ENCODE measurements at regions of chr15 and their contacts with region 1.

Region 1: GRCh38 chr15:94163999-94164807 is 67.2 kb upstream of the MCTP2 start:
- DNase-seq: peak; percentile 60

Region 2: GRCh38 chr15:94182883-94183282 is 18.7 kb after region 1 on chr15:
- CTCF ChIA-PET with region 1: no interaction called
- POLR2A ChIA-PET with region 1: no interaction called
- DNase-seq: no peak

Region 3: DNA sequence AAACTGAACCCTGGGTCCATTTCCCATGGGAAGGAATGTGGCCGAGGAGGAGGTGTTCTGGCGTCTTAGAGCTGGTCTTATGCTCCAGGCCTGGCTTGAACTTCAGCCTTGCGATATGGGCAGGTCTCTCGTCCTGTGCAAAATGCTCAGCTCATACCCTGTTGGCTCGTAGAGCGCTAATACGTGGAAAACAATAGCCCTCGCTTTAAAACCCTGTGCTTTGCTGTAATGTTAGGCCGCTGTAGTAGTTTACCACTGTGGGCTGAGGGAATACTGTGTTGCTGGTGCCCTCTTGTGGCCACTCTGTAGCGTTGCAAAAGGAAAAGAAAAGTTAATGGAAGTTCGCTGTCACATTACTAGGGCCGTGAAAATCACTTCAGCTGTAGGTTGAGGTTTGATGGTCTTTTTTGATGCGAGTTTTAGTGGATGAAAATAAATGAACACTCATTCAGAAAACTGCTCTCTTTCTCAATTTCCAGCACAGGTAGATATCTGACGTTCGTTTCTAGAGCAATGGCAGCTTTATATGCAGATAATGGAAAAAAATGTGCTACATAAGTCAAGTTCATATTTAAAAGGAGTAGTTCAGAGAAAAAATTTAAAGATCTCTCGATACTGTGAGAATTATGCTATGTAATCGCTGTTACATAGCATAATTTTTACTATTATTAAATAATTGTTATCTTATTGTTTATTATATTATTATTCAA is 160.1 kb after region 1 on chr15:
- CTCF ChIA-PET with region 1: interaction called, 76 read pairs
- POLR2A ChIA-PET with region 1: no interaction called
- DNase-seq: peak; percentile 72

Region 4: GRCh38 chr15:94338243-94338846 is 174.1 kb after region 1 on chr15:
- CTCF ChIA-PET with region 1: no interaction called
- POLR2A ChIA-PET with region 1: no interaction called
- DNase-seq: no peak